CD8-positive, alpha-beta T cell (primary cell): ENCODE measurements at regions of chr13 and their contacts with region 1.

Region 1: GRCh38 chr13:98981369-98982080 is 3.7 kb upstream of the DOCK9 start:
- DNase-seq: peak in 1 of 9 experiments; percentile 36
- ATAC-seq: peak; percentile 73
- H3K4me3 ChIP-seq: no peak overlapping the region
- H3K4me3 Mint-ChIP-seq: peak overlapping the region; percentile 6
- H3K27ac ChIP-seq: no peak overlapping the region
- H3K27ac Mint-ChIP-seq: peak overlapping the region; percentile 19
- H3K4me1 ChIP-seq: peaks cover 44% of the 10 kb centered on the region
- H3K4me1 Mint-ChIP-seq: peaks cover 88% of the 10 kb centered on the region
- H3K27me3 ChIP-seq: no peaks in the 10 kb centered on the region
- H3K27me3 Mint-ChIP-seq: no peaks in the 10 kb centered on the region
- CTCF ChIP-seq: no peak

Region 2: GRCh38 chr13:98947925-98948324 is 33.6 kb before region 1 on chr13:
- CTCF ChIA-PET with region 1: interaction called, 3 read pairs
- POLR2A ChIA-PET with region 1: no interaction called
- intact Hi-C with region 1: loop called in 1 of 2 experiments (anchors 5 kb)
- DNase-seq: no peak
- ATAC-seq: no peak
- H3K4me3 ChIP-seq: no peak overlapping the region
- H3K4me3 Mint-ChIP-seq: no peak overlapping the region
- H3K27ac ChIP-seq: no peak overlapping the region
- H3K27ac Mint-ChIP-seq: no peak overlapping the region
- H3K4me1 ChIP-seq: peaks cover 7% of the 10 kb centered on the region
- H3K4me1 Mint-ChIP-seq: peaks cover 48% of the 10 kb centered on the region
- H3K27me3 ChIP-seq: no peaks in the 10 kb centered on the region
- H3K27me3 Mint-ChIP-seq: no peaks in the 10 kb centered on the region
- CTCF ChIP-seq: no peak